ENCODE measurements at regions of chr20 and their contacts with region 1.

Region 1: DNA sequence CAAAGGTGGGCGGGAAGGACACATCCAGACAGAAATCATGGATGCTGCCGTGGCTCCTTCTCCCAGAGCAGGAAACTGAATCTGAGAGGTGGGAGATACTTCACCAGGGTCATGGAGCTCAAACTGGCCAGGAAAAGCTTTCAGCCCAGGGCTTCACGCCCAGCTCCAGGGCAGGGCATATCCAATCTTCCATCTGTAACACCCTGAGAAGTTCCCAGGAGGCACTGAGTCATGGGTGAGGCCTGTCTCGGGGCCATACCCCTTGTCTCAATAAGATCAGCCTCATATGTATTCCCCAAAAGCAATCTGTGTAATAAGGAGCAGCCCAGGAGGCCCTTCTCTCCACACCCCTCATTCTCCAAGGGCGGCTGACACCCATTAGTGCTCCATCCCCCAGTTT is 439.2 kb upstream of the SULF2 start:
- DNase-seq: no peak
- H3K4me3 ChIP-seq: no peak overlapping the region
- H3K27ac ChIP-seq: no peak overlapping the region
- H3K4me1 ChIP-seq: no peaks in the 10 kb centered on the region
- H3K27me3 ChIP-seq: no peaks in the 10 kb centered on the region
- CTCF ChIP-seq: no peak

Region 2: GRCh38 chr20:47767972-47768794 is 456.3 kb before region 1 on chr20:
- CTCF ChIA-PET with region 1: interaction called, 17 read pairs
- dilution Hi-C with region 1: no loop called
- in situ Hi-C with region 1: no loop called
- intact Hi-C with region 1: no loop called
- DNase-seq: no peak
- H3K4me3 ChIP-seq: no peak overlapping the region
- H3K27ac ChIP-seq: no peak overlapping the region
- H3K4me1 ChIP-seq: peaks cover 5% of the 10 kb centered on the region
- H3K27me3 ChIP-seq: no peaks in the 10 kb centered on the region
- CTCF ChIP-seq: no peak

Region 3: DNA sequence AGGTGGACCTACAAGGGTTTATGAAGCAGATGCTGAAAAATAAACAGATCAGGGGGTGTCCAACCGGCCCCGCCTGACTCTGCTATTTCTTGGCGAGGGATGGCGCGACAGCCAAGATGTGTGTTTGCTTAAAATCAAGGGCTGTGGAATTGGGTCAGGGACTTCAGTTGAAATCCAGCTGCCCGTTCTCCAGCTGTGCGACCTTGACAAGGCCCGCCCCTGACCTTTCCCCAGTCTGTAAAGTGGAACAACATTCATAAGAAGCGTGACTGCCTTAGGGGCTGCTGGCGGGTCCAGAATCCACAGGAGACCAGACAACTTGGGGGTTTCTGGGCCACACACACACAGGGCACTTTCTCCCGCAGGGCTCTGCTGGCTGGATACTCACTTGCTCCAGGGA is 85.8 kb after region 1 on chr20:
- CTCF ChIA-PET with region 1: no interaction called
- dilution Hi-C with region 1: loop called (anchors 5 kb)
- in situ Hi-C with region 1: no loop called
- intact Hi-C with region 1: no loop called
- DNase-seq: no peak
- H3K4me3 ChIP-seq: no peak overlapping the region
- H3K27ac ChIP-seq: no peak overlapping the region
- H3K4me1 ChIP-seq: no peaks in the 10 kb centered on the region
- H3K27me3 ChIP-seq: no peaks in the 10 kb centered on the region
- CTCF ChIP-seq: no peak

Region 4: DNA sequence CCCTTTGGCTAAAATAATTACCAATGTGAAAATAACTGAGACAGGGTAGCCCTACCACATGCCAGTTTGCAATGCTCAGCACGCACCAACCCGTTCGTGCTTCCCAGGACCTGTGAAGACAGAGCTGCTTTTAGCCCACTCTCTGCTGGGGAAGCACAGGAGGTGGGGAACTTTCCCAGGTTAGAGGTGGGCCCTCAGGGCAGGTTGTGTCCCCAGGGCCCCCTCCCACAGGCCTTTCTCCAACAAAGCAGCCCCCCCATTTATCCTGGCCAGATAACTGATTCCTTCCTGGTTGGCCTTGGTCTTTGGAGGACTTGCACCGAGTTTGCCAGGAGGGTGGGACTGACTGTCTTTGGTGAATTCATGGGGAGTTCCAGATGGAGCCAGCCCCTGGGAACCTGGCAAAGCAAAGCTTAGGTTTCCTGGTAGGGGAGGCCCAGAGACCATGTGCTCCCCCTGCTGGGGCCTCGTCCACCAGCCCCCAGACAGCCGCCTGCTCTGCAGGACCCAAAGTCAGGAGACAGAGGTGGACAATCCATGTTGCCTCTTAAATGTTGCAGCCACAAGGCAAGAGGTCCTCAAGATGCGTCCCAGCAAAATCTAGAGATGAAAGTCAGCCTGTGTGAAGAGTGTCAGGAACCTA is 105.2 kb after region 1 on chr20:
- CTCF ChIA-PET with region 1: no interaction called
- dilution Hi-C with region 1: no loop called
- in situ Hi-C with region 1: no loop called
- intact Hi-C with region 1: no loop called
- DNase-seq: no peak
- H3K4me3 ChIP-seq: no peak overlapping the region
- H3K27ac ChIP-seq: no peak overlapping the region
- H3K4me1 ChIP-seq: no peaks in the 10 kb centered on the region
- H3K27me3 ChIP-seq: peaks cover 9% of the 10 kb centered on the region
- CTCF ChIP-seq: no peak

Region 5: GRCh38 chr20:48383846-48384673 is 159.5 kb after region 1 on chr20:
- CTCF ChIA-PET with region 1: interaction called, 19 read pairs
- dilution Hi-C with region 1: no loop called
- in situ Hi-C with region 1: no loop called
- intact Hi-C with region 1: no loop called
- DNase-seq: no peak
- H3K4me3 ChIP-seq: no peak overlapping the region
- H3K27ac ChIP-seq: no peak overlapping the region
- H3K4me1 ChIP-seq: no peaks in the 10 kb centered on the region
- H3K27me3 ChIP-seq: no peaks in the 10 kb centered on the region
- CTCF ChIP-seq: no peak

Measured in mammary epithelial cell (primary cell).